Activated B cell treated with CpG ODN at 0.5 μM for 24 hours (primary cell): ENCODE measurements at regions of chr22 and their contacts with region 1.

Region 1: DNA sequence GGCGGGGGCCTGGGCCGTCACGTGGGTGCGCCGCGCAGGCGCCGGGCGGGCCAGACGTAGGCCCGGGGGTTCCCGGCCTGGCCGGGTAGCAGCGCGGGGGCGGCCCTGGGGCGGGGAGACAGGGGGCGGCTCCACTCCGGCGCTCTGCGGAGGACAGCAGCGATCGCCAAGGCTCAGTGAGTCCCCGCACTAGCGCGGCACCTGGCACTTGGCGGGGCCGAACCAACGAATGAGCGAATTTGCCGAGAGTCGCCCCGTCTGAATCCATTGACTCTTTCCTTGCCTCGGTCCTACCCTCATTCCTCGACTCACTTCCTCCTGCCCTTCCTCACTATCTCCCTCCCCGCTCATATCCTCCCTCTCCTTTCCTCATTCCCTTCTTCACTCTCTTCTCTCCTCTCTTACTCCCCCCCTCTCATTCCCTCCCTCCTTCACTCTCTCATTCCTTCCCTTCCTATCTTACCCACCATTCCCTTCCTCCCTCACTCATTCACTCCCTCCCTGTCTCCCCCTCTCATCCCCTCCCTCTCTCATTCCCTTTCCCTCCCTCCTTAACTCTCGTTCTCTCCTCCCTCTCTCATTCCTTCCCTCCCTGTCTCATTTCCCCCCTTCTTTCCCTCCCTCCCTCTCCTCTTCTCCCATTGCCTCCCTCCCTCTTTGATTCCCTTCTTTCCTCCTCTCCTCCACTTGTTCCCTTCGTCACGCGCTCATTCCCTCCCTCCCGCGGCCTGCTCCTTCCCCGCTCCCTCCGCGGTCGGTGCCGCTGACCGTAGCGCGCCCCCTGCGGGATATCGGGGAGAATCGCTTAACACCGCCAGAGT is 476 bp upstream of the KLHL22 start:
- DNase-seq: peak; percentile 95
- ATAC-seq: peak; percentile 97
- H3K4me3 Mint-ChIP-seq: peak overlapping the region; percentile 92
- H3K27ac Mint-ChIP-seq: peak overlapping the region; percentile 93
- H3K4me1 Mint-ChIP-seq: peaks cover 28% of the 10 kb centered on the region
- H3K27me3 Mint-ChIP-seq: no peaks in the 10 kb centered on the region
- CTCF ChIP-seq: peak; percentile 68

Region 2: GRCh38 chr22:20418211-20418788 is 77.8 kb before region 1 on chr22:
- CTCF ChIA-PET with region 1: interaction called, 8 read pairs
- POLR2A ChIA-PET with region 1: no interaction called
- intact Hi-C with region 1: loop called (anchors 1 kb)
- DNase-seq: peak; percentile 66
- ATAC-seq: peak; percentile 90
- H3K4me3 Mint-ChIP-seq: peak overlapping the region; percentile 68
- H3K27ac Mint-ChIP-seq: no peak overlapping the region
- H3K4me1 Mint-ChIP-seq: peaks cover 4% of the 10 kb centered on the region
- H3K27me3 Mint-ChIP-seq: peaks cover 3% of the 10 kb centered on the region
- CTCF ChIP-seq: no peak

Region 3: DNA sequence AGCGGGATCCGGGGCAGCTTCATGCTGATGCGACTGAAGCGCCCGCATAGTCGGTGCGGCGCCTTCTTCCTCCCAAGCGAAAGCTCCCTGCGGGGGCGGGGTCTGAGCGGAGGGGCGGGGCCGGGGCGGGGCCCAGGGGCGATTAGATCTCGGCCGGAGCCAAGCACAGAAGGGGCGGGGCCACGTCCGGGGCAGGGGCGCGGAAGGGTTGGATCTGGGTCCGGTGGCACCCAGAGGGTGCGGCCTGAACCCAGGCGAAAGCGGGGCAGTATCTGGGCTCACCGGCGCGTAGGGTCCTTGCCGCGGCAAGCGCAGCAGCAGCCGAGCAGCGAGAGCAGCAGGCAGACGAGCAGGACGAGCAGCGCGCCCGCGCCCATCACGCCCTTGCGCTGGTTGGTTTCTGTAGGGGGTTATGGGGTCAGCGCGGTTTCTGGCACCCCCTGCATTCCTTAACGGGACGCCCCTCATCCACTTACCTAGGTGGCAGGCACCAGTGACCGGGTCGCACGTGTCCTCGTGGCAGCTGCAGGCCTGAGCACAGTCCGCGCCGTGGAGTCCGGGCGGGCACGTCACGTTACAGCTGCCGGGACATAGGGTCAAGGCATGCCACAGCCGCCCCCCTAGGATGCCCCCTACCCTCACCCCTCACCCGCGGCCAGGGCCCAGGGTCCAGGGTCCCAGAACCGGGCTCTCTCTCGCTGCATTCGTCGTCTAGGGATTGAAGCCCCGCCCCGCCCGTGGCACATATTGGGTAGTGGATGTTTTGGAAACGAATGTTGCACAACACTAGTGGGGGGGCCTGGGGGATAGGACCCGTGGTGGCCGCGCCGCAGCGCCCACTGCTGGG is 66.6 kb before region 1 on chr22:
- CTCF ChIA-PET with region 1: no interaction called
- POLR2A ChIA-PET with region 1: no interaction called
- intact Hi-C with region 1: loop called (anchors 1 kb)
- DNase-seq: peak; percentile 77
- ATAC-seq: peak; percentile 83
- H3K4me3 Mint-ChIP-seq: peak overlapping the region; percentile 85
- H3K27ac Mint-ChIP-seq: no peak overlapping the region
- H3K4me1 Mint-ChIP-seq: peaks cover 25% of the 10 kb centered on the region
- H3K27me3 Mint-ChIP-seq: peaks cover 32% of the 10 kb centered on the region
- CTCF ChIP-seq: no peak

Region 4: GRCh38 chr22:20456064-20456721 is 39.9 kb before region 1 on chr22:
- CTCF ChIA-PET with region 1: interaction called, 6 read pairs
- POLR2A ChIA-PET with region 1: no interaction called
- intact Hi-C with region 1: loop called (anchors 1 kb)
- DNase-seq: peak; percentile 60
- ATAC-seq: peak; percentile 100
- H3K4me3 Mint-ChIP-seq: no peak overlapping the region
- H3K27ac Mint-ChIP-seq: no peak overlapping the region
- H3K4me1 Mint-ChIP-seq: peaks cover 20% of the 10 kb centered on the region
- H3K27me3 Mint-ChIP-seq: no peaks in the 10 kb centered on the region
- CTCF ChIP-seq: no peak

Region 5: DNA sequence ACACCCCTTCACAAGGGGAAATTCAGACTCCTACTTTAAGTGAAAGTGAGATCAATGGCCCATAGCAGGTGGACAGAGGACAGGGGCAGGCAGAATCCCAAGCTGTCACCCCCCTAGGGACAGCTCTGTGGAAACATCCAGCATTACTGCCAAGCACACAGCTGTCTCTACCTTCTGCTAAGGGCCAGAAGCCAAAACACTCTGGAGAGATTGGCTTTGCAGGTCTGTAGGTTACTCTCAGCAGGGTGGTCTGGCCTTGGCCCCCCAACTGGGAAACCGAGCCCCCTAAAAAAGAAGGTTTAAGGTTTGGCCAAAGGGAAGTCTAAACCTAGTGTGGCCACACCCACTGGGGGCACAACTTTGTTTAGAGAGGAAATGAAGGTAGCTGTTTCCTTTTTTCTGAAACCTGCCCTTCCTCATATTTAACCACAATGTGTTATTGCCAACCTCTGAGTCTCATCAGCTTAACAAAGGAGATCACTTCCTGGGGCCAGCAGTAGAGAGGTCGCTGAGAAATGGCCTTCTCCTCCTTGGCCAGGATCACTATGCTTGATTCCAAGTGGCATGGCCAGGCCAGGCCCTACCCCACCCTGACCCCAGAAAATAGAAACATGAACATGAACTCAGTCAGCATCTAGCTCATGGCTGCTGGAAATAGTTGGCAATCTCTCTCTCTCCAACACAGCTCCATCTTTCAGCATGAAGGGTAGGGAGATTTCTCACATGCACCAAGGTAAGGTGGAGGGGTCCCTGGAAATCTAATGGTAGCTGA is 32.6 kb before region 1 on chr22:
- CTCF ChIA-PET with region 1: interaction called, 6 read pairs
- POLR2A ChIA-PET with region 1: interaction called, 8 read pairs
- intact Hi-C with region 1: loop called (anchors 1 kb)
- DNase-seq: peak; percentile 29
- ATAC-seq: peak; percentile 76
- H3K4me3 Mint-ChIP-seq: peak overlapping the region; percentile 49
- H3K27ac Mint-ChIP-seq: peak overlapping the region; percentile 99
- H3K4me1 Mint-ChIP-seq: peaks cover 47% of the 10 kb centered on the region
- H3K27me3 Mint-ChIP-seq: no peaks in the 10 kb centered on the region
- CTCF ChIP-seq: no peak

Region 6: DNA sequence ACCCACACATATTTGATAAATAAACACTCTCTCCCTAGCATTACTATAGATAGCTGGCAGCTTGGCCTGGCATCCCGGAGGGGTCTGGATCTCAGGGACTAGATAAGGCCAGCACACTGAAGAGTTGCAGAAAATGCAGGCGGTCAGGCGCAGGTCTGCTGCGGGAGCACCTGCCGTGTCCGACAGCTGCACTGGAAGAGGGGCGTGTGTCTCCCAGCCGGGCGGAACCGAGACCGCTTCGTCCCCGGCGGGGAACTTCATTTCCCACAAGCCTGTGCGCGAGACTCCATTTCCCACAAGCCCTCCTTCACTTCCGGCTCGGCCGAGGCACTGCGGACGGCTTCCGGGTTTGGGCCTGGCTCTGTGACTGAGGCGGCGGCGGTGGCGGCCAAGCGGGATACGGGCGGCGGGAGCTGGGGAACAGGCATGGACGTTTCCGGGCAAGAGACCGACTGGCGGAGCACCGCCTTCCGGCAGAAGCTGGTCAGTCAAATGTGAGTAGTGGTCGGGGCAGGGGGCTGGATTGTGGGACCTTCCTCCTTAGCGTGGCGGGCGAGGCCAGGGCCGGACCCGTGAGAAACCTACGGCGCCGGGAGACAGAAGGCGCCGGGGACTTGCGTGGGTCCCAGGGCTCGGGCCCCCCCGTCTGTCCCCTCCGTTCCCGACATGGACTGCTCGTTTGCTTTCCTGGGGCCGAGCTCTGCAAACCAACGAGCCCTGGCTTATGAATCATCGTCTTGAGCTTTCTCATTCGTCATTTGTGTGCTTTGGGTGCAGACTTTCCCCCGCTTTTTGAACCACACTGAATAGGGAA is 11.4 kb after region 1 on chr22 and contains the start of gene MED15:
- CTCF ChIA-PET with region 1: interaction called, 3 read pairs
- POLR2A ChIA-PET with region 1: interaction called, 4 read pairs
- intact Hi-C with region 1: loop called (anchors 1 kb)
- DNase-seq: peak; percentile 85
- ATAC-seq: peak; percentile 82
- H3K4me3 Mint-ChIP-seq: peak within 1 kb of the TSS; percentile 96
- H3K27ac Mint-ChIP-seq: peak within 1 kb of the TSS; percentile 94
- H3K4me1 Mint-ChIP-seq: peaks cover 52% of the 10 kb centered on the region
- H3K27me3 Mint-ChIP-seq: no peaks in the 10 kb centered on the region
- CTCF ChIP-seq: no peak
- total RNA-seq, gene MED15: 112 and 127 TPM in 2 replicates

Region 7: DNA sequence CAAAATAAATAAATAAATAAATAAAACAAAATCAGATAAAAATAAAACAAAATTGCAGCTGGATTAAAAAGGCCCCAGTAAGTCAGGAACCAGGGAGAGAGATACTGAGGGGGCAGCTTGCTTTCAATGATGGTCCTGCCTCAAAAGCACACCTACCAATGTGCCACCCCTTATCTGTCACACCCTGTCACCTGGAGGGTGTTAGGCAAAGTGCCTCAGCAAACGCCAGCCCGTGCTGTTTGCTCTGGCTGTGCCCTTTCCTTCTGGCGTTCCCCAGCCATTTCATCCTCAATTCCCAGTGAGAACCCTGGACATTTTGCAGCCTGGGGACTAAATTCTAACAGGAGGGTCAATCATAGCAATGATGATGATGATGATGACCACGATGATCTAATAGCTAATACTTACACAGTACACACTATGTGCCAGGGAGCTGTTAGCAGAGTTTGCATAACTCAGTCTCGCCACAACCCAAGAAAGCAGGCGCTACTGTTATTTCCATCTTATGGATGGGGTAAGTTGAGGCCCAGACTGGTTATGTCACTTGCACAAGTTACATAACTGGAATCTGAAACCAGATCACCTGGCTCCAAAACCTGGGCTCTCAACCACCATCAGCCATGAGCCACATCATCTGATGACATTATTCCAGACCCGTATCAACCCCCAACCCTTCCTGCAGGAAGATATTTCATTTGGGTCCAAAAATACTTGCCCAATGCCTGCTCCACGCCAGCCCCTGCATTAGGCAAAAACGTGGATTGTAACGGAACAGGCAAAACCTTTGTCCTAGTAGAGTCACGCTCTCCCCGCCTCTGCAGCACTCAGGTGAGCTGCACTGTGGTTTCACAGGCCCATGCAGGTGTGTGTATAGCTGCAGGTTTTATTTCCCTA is 145.2 kb after region 1 on chr22:
- CTCF ChIA-PET with region 1: no interaction called
- POLR2A ChIA-PET with region 1: no interaction called
- intact Hi-C with region 1: no loop called
- DNase-seq: no peak
- ATAC-seq: no peak
- H3K4me3 Mint-ChIP-seq: no peak overlapping the region
- H3K27ac Mint-ChIP-seq: no peak overlapping the region
- H3K4me1 Mint-ChIP-seq: no peaks in the 10 kb centered on the region
- H3K27me3 Mint-ChIP-seq: peaks cover 13% of the 10 kb centered on the region
- CTCF ChIP-seq: no peak